RWPE1 (cell line): ENCODE measurements at regions of chr1 and their contacts with region 1.

Region 1: GRCh38 chr1:27357281-27358037 is 9.3 kb downstream of the MAP3K6 start:
- DNase-seq: peak; percentile 77
- H3K27ac ChIP-seq: peak overlapping the region; percentile 98
- CTCF ChIP-seq: peak; percentile 92

Region 2: GRCh38 chr1:27332536-27333281 is 24.8 kb before region 1 on chr1:
- CTCF ChIA-PET with region 1: interaction called, 11 read pairs
- POLR2A ChIA-PET with region 1: no interaction called
- DNase-seq: no peak
- H3K27ac ChIP-seq: peak overlapping the region; percentile 98
- CTCF ChIP-seq: peak; percentile 83

Region 3: GRCh38 chr1:27388337-27389005 is 31.0 kb after region 1 on chr1:
- CTCF ChIA-PET with region 1: interaction called, 10 read pairs
- POLR2A ChIA-PET with region 1: no interaction called
- DNase-seq: peak; percentile 74
- H3K27ac ChIP-seq: no peak overlapping the region
- CTCF ChIP-seq: peak; percentile 91

Region 4: DNA sequence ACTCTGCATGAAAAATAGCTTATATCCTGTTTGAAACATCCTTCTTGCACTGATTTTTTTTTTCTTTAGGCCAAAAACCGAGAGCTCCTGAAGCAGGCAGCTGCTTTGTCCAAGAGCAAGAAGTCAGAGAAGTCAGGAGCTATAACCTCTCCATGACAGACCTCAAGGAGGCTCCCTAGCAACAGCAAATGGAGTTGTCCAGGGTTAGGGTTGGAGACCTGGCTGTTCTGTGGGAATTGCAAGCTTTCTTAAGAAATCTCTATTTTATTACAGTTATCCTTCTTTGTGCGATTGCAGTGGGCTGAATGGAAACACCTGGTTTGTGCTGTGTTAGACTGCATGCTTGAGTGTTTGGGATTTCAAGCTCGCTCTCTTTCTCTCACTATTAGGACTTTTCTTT is 403.0 kb after region 1 on chr1:
- CTCF ChIA-PET with region 1: no interaction called
- POLR2A ChIA-PET with region 1: no interaction called
- DNase-seq: no peak
- H3K27ac ChIP-seq: no peak overlapping the region
- CTCF ChIP-seq: no peak